ENCODE measurements at regions of chr12 and their contacts with region 1.

Region 1: DNA sequence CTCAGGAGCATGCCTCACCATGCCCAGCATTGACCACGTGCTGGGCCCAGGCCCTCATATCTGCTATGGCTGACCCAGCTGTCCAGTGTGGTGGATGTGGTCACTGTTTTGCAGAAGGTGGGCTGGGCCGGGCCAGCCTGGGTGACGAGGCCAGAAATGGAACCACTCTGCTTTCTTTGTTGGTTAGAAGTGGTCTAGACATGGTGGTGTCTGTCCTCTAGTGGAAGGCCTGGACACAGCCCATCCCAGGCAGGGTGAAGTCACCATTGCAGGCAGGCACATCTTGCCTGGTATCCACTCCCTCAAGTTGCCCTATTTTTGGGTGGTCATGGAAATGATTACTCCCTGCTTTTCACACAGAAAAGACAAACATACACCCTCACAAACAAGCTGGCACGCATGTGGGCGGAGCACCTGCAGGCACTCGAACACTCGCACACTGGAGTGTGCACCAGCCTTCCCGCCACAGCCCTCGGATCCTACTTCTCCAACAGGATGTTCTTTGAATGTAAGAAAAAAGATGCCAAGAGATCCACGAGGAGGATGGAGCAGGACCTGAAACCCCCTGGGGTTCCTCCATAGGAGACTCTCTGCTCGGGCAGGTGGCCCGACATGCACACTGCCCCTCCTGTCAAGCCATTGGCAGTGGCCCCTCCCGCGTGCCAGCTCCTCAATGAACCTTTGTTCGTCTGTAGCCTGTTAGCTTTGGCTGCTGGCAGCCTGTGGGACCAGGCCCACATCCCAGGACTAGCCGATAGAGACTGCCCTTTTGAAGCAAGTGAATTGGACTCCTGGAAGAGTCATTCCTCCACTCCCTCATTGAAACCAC is 38.4 kb downstream of the MLXIP start:
- DNase-seq: no peak
- ATAC-seq: peak; percentile 51

Region 2: DNA sequence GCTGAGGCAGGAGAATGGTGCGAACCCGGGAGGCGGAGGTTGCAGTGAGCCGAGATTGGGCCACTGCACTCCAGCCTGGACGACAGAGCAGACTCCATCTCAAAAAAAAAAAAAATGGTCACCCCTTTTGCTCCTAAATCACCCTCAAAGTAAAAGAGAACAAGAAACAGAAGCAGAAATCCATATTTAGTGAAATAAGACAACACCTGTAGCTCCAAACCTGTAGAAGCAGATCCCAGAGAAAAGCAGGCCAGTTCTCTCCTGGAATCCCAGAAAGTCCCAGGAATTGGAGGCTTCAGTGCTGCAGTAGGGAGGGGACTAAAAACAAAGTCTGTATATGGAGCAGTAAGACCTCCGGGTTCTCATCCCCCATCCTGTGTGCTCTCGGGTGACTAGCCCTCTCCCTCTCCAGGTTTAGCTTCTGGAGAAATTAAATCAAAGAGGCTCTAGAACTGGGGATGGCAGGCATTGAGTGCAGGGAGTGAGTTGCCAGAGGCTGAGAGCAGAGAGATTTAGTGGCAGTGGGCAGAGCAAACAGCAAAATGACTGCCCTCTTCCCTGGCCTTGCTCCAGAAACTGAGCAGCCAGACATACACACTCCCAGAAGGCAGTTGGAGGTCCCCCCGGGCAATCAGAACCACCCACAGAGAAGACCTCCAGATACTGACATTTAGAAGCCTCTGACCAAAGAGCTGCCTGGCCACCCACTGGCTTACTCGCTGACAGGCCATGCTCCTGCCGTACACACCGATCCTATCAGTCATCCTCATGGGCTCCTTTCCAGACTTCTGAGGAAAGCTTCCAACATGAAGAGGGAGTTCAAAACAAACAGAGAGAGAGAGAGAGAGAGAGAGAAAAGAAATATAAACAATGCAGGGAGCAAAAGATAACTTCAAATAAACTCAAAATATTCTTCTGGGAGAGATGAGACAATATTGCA is 44.6 kb before region 1 on chr12:
- intact Hi-C with region 1: loop called (anchors 5 kb)
- DNase-seq: peak; percentile 70
- ATAC-seq: peak; percentile 92